ENCODE measurements at regions of chr11 and their contacts with region 1.

Region 1: GRCh38 chr11:76339221-76339620 is 41.7 kb downstream of the THAP12 start:
- DNase-seq: peak; percentile 46 to 67
- ATAC-seq: peak; percentile 89 to 96 (median 94)
- H3K4me3 ChIP-seq: no peak overlapping the region
- H3K27ac ChIP-seq: peak overlapping the region; percentile 19 to 87 (median 72)
- H3K4me1 ChIP-seq: peaks cover 0 to 40% (median 20%) of the 10 kb centered on the region in 9 donors
- H3K27me3 ChIP-seq: no peaks in the 10 kb centered on the region
- CTCF ChIP-seq: no peak

Region 2: DNA sequence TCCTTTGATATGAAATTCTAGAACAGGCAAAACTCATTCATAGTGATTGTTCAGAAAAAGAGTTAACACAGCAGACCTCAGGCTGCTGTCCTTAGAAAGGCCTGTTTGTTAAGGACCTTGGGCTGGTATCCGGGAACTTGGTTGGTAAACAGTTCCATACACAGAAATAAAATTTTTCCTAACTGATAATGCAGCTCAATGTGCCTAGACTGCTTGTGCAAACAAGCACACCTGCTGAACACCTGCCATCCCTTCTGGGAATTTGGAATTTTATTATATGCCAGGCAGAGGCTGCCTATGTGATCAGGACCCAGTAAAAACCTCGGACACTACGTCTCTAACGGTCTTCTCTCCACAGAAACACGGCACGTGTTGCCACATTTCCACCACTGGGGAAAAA is 30.2 kb after region 1 on chr11:
- intact Hi-C with region 1: loop called in 1 of 10 experiments (anchors 1 kb)
- DNase-seq: no peak
- ATAC-seq: no peak
- H3K4me3 ChIP-seq: no peak overlapping the region
- H3K27ac ChIP-seq: no peak overlapping the region
- H3K4me1 ChIP-seq: peaks cover 0 to 40% (median 31%) of the 10 kb centered on the region in 9 donors
- H3K27me3 ChIP-seq: no peaks in the 10 kb centered on the region
- CTCF ChIP-seq: no peak

Region 3: DNA sequence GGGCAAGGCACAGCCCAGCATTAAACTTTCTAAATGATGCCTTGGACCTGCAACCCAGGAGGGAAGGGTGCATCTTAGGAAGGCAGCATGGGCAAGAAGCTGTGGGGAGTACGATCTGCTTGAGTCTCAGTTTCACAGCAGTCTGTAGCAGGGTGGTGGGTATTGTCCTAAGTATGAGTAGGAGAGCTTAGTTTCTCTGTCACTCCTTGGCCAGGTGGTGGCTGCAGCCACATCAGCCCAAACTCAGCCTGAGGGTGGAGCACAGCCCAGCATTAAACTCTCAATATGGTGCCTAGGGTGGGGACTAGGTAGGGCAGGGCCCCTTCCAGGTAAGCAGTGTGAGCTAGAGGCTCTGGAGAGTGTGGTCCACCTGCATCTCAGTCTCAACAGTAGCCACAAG is 607.0 kb after region 1 on chr11:
- intact Hi-C with region 1: no loop called
- DNase-seq: no peak
- ATAC-seq: no peak
- H3K4me3 ChIP-seq: no peak overlapping the region
- H3K27ac ChIP-seq: no peak overlapping the region
- H3K4me1 ChIP-seq: no peaks in the 10 kb centered on the region
- H3K27me3 ChIP-seq: no peaks in the 10 kb centered on the region
- CTCF ChIP-seq: no peak